Right ventricle myocardium inferior (tissue), 1 donor: ENCODE measurements at regions of chr11 and their contacts with region 1.

Region 1: GRCh38 chr11:1309498-1310317 is at the start of gene TOLLIP:
- DNase-seq: peak; percentile 98
- ATAC-seq: peak; percentile 97
- total RNA-seq, gene TOLLIP: 46.8 TPM

Region 2: GRCh38 chr11:1262172-1263006 is 47.3 kb before region 1 on chr11:
- intact Hi-C with region 1: loop called (anchors 2 kb)
- DNase-seq: peak; percentile 94
- ATAC-seq: peak; percentile 96

Region 3: GRCh38 chr11:1276041-1276790 is 33.5 kb before region 1 on chr11:
- intact Hi-C with region 1: no loop called
- DNase-seq: peak; percentile 58
- ATAC-seq: peak; percentile 58

Region 4: GRCh38 chr11:1358286-1358685 is 48.6 kb after region 1 on chr11:
- intact Hi-C with region 1: no loop called
- DNase-seq: peak; percentile 52
- ATAC-seq: no peak

Region 5: DNA sequence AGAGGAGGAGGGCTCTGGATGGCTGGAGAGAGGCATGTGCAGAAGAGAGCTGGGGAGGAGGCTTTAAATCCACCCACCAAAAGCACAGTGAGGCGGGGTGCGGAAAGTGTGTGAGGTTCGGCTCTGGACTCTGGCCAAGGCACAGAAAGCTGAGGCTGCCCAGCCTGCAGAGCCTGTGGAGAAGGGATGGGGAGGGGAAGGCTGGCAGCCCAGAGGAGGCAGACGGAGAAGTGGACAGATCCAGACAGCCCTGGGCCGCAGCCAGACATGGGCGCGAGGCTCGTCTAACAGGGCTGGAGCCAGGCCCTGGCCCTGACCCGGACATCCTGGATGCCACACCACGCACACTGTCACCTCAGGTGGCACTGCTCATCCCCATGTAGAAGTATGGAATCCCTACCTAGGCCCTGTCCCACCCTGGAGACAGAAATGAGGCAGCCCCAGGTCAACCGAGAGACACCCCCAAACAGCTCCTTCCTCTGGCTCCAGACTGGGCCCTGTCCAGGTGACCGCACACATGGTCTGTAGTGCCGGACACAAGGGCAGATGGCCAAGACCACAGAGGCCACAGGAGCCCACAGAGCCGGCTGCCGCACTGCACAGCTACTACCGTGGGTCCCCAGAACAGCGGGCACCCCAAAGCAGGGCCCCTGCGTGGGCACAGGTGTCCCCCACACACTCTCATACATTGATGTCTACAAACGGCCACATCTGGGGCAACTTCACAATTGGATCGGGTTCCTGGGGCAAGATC is 193.4 kb after region 1 on chr11:
- intact Hi-C with region 1: no loop called
- DNase-seq: peak; percentile 74
- ATAC-seq: peak; percentile 55